Right lobe of liver (tissue), 6 donors: ENCODE measurements at regions of chr7 and their contacts with region 1.

Region 1: GRCh38 chr7:122528879-122529481 is 169.9 kb downstream of the RNF133 start:
- DNase-seq: no peak
- ATAC-seq: peak in 3 of 4 donors; percentile 59 to 63 (median 63)
- H3K4me3 ChIP-seq: no peak overlapping the region
- H3K27ac ChIP-seq: no peak overlapping the region
- H3K4me1 ChIP-seq: no peaks in the 10 kb centered on the region
- H3K27me3 ChIP-seq: no peaks in the 10 kb centered on the region
- CTCF ChIP-seq: peak; percentile 50 to 71 (median 68)
- POLR2A ChIP-seq: no peak

Region 2: GRCh38 chr7:122219253-122219865 is 309.6 kb before region 1 on chr7:
- intact Hi-C with region 1: loop called in 1 of 2 experiments (anchors 10 kb)
- DNase-seq: no peak
- ATAC-seq: peak; percentile 50 to 68 (median 58)
- H3K4me3 ChIP-seq: no peak overlapping the region
- H3K27ac ChIP-seq: no peak overlapping the region
- H3K4me1 ChIP-seq: peaks cover 0 to 11% (median 0%) of the 10 kb centered on the region in 4 donors
- H3K27me3 ChIP-seq: no peaks in the 10 kb centered on the region
- CTCF ChIP-seq: peak; percentile 63 to 74 (median 68)
- POLR2A ChIP-seq: no peak

Region 3: GRCh38 chr7:122468945-122469344 is 60.0 kb before region 1 on chr7:
- intact Hi-C with region 1: no loop called
- DNase-seq: no peak
- ATAC-seq: no peak
- H3K4me3 ChIP-seq: no peak overlapping the region
- H3K27ac ChIP-seq: no peak overlapping the region
- H3K4me1 ChIP-seq: no peaks in the 10 kb centered on the region
- H3K27me3 ChIP-seq: no peaks in the 10 kb centered on the region
- CTCF ChIP-seq: no peak
- POLR2A ChIP-seq: no peak